Pancreas (tissue), 10 donors: ENCODE measurements at regions of chr17 and their contacts with region 1.

Region 1: DNA sequence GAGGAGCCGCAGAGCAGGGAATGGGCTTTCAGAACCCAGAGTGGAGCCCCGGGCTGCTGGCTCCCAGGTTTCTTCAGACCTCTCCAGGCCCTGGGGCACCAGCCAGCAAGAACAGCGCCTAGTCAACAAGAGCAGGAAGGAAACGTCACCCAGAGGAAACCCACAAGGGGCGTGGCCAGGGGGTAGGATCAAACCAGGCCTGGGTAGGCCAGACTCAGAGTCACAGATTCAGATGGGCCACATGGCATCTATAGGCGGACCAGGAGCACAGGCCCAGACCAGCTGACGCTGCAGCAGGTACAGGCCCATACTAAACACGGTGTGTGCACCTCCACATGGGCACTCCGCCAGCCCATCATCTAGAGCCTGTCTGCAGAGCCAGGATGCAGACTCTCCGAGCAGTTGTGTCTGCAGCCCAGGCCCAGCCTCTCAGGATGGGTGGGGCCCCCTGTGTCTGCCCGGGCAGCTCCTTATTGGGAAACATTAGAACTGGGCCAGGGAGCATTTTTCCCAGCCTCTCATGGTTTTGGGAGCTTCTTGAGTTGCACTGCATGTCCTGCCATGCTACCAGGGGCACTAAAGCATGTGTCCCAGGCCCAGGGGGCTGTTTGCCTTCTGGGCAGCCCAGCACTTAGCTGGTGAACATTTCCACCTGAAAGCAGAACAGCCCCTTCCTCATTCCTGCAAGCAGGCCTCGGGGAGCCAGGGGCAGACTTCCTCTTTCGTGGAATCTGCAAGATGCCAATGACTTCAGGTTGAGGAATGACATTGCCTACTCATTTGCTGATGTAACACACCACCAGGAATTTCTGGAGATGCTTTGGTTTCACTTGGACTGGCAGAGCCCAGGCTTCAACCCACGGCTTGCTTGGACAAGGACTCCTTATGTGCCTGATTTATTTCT is at the start of gene NLRP1:
- DNase-seq: peak in 5 of 6 donors; percentile 23 to 79 (median 40)
- ATAC-seq: peak in 3 of 4 donors; percentile 82 to 91 (median 87)
- H3K4me3 ChIP-seq: peak within 1 kb of the TSS in 2 of 4 donors; percentile 23 to 33
- H3K27ac ChIP-seq: peak within 1 kb of the TSS in 3 of 4 donors; percentile 28 to 51 (median 37)
- H3K4me1 ChIP-seq: no peaks in the 10 kb centered on the region
- H3K27me3 ChIP-seq: no peaks in the 10 kb centered on the region
- CTCF ChIP-seq: no peak
- total RNA-seq, gene NLRP1: 2.0 to 13.1 (median 6.7) TPM

Region 2: DNA sequence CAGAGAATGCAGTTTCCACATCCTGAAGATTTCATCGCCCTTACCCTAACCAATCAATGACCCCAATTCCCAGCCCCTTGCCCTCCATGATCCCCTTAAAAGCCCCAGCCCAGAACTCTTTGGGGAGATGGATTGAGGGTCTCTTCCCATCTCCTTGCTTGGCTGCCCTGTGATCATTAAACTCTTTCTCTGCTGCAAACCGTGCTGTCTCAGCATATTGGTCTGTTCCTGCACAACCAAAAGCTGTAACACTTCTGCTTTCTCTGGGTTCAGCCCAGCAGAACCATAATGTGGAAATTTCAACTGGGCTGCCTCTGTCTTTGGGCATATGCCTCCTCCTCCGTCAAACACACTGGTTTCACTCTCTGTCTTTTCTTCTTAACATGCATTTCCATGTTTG is 66.7 kb after region 1 on chr17:
- intact Hi-C with region 1: no loop called
- DNase-seq: no peak
- ATAC-seq: no peak
- H3K4me3 ChIP-seq: no peak overlapping the region
- H3K27ac ChIP-seq: no peak overlapping the region
- H3K4me1 ChIP-seq: no peaks in the 10 kb centered on the region
- H3K27me3 ChIP-seq: no peaks in the 10 kb centered on the region
- CTCF ChIP-seq: no peak

Region 3: DNA sequence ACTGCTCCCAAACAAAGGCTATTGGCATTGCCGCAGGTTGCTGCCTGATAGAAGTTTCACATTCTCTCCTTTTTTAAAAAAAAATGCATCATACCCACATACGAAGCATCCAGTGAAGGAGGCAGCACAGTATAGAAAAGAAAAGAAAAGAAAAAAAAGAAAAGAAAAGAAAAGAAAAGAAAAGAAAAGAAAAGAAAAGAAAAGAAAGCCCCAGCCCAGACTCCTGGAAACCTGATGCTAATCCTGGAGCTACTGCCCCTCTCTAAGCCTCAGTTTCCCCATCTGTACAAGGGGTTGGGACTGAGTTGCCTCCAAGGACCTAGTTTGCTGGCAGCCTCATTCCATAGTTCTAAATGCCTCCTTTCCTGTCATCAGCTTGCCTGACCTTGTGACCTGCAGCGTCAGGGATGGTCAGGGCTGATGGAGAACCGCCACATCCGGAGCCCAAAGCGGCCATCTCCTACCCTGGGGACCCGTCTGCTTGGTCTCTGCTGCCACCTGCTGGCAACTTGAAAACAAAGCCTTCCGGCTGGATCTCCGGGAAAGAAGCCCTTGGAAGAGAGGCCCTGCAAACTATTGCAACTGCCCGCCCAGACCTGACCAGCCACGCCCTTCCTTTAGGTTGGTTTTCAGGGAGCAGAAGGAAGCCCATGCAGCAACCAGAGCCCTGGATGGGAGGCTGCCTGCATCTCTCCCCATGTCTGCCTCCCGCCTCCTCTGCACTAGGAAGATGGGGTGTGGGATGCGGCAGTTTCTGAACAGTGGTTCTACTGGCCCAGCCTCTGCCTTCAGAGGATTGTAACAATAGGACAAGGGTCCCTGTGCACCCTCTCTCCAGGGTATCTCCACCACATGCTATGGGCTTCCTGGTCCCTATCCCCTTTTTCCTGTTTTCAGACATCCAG is 837.3 kb after region 1 on chr17:
- intact Hi-C with region 1: loop called (anchors 2 to 10 kb)
- DNase-seq: peak; percentile 53 to 86 (median 78)
- ATAC-seq: peak; percentile 72 to 93 (median 90)
- H3K4me3 ChIP-seq: no peak overlapping the region
- H3K27ac ChIP-seq: no peak overlapping the region
- H3K4me1 ChIP-seq: no peaks in the 10 kb centered on the region
- H3K27me3 ChIP-seq: no peaks in the 10 kb centered on the region
- CTCF ChIP-seq: peak; percentile 71 to 84 (median 84)